ENCODE measurements at regions of chr1 and their contacts with region 1.

Region 1: GRCh38 chr1:177794376-177794991 is 175.4 kb downstream of the SEC16B start:
- DNase-seq: no peak
- ATAC-seq: no peak
- H3K4me3 ChIP-seq: no peak overlapping the region
- H3K27ac ChIP-seq: no peak overlapping the region
- H3K4me1 ChIP-seq: no peaks in the 10 kb centered on the region
- H3K27me3 ChIP-seq: no peaks in the 10 kb centered on the region
- CTCF ChIP-seq: no peak
- EP300 ChIP-seq: no peak
- POLR2A ChIP-seq: no peak
- RAD21 ChIP-seq: no peak

Region 2: GRCh38 chr1:177809819-177810218 is 15.3 kb after region 1 on chr1:
- CTCF ChIA-PET with region 1: interaction called, 13 read pairs
- POLR2A ChIA-PET with region 1: interaction called, 10 read pairs
- RAD21 ChIA-PET with region 1: interaction called, 25 read pairs
- SMC1A ChIA-PET with region 1: interaction called, 43 read pairs
- in situ Hi-C with region 1: no loop called
- intact Hi-C with region 1: no loop called
- DNase-seq: peak; percentile 38
- ATAC-seq: peak; percentile 94
- H3K4me3 ChIP-seq: no peak overlapping the region
- H3K27ac ChIP-seq: no peak overlapping the region
- H3K4me1 ChIP-seq: no peaks in the 10 kb centered on the region
- H3K27me3 ChIP-seq: no peaks in the 10 kb centered on the region
- CTCF ChIP-seq: no peak
- EP300 ChIP-seq: no peak
- POLR2A ChIP-seq: no peak
- RAD21 ChIP-seq: no peak

Region 3: DNA sequence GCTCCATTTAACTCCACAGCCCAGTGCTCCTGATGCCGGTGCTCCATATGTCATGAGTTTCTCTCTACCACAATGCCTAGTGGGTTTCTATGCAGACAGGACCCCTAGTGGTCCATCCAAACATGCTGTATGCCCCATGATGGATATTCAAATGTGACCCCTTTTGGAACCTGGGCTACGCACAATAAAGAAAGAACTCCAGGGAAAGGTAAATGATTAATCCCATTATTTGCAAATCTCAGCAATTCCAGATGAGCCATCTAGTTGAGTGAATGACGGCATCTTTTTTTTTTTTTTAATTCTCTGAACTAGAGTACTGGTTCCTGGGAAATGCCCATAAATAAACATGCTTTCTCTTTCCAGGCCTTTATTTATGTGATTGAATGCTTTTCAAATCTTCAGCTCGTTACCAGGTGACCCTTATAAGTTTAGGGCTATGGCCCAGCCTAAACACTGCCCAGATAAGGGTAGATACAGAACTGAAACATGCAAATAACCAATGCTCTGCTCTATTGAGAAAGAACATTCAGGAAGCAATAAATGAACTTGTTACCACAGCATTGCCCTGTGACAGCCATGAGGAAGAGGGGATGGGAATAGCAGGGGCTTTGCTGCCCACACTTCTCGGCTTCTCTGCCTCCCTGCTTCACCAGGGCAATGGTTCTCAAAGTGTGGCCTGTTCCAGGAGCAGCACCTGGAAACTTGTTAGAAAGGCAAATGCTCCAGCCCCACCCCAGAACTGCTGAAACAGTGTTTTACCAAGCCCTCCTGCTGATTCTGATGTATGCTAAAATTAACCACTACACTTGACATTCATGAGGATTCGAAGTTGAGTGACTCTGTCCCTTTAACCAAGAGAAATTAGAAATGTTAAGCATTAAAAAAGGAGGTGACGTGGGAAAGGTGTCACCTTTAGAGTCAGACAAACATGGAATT is 23.7 kb after region 1 on chr1:
- CTCF ChIA-PET with region 1: interaction called, 4 read pairs
- POLR2A ChIA-PET with region 1: interaction called, 5 read pairs
- RAD21 ChIA-PET with region 1: interaction called, 8 read pairs
- SMC1A ChIA-PET with region 1: interaction called, 16 read pairs
- in situ Hi-C with region 1: no loop called
- intact Hi-C with region 1: no loop called
- DNase-seq: peak; percentile 40
- ATAC-seq: peak; percentile 96
- H3K4me3 ChIP-seq: no peak overlapping the region
- H3K27ac ChIP-seq: no peak overlapping the region
- H3K4me1 ChIP-seq: peaks cover 5% of the 10 kb centered on the region; the same call in 1 of the 2 replicates
- H3K27me3 ChIP-seq: no peaks in the 10 kb centered on the region
- CTCF ChIP-seq: no peak
- EP300 ChIP-seq: peak in 1 of 2 experiments; percentile 25; a peak in 1 of 4 replicates
- POLR2A ChIP-seq: no peak
- RAD21 ChIP-seq: no peak

Region 4: DNA sequence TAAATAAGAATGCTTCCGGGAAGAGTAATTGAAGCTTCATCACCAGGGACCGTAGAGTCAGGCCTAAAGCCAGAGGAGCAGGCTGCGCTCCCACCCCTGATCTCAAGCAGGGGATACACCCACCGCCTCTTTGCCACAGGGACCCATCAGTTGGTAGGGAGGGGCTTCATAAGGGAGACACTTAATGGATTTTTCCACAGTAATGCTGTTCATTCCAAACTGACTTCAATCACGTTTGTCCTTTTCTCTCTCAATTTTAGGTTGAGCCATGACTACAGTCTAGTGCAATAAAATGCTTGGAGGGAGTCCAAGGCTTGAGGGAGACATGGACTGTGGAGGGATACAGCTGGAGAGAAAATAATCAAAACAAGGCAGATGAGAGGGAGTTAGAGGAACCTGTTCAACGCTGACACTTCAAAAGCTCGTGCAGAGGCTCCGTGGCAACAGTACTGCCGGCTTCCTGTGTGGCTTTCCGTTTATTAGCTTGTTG is 63.9 kb after region 1 on chr1:
- CTCF ChIA-PET with region 1: interaction called, 3 read pairs
- POLR2A ChIA-PET with region 1: interaction called, 5 read pairs
- RAD21 ChIA-PET with region 1: interaction called, 10 read pairs
- SMC1A ChIA-PET with region 1: interaction called, 12 read pairs
- in situ Hi-C with region 1: no loop called
- intact Hi-C with region 1: no loop called
- DNase-seq: no peak
- ATAC-seq: peak; percentile 55
- H3K4me3 ChIP-seq: no peak overlapping the region
- H3K27ac ChIP-seq: no peak overlapping the region
- H3K4me1 ChIP-seq: no peaks in the 10 kb centered on the region
- H3K27me3 ChIP-seq: no peaks in the 10 kb centered on the region
- CTCF ChIP-seq: no peak
- EP300 ChIP-seq: no peak
- POLR2A ChIP-seq: no peak
- RAD21 ChIP-seq: no peak

Region 5: DNA sequence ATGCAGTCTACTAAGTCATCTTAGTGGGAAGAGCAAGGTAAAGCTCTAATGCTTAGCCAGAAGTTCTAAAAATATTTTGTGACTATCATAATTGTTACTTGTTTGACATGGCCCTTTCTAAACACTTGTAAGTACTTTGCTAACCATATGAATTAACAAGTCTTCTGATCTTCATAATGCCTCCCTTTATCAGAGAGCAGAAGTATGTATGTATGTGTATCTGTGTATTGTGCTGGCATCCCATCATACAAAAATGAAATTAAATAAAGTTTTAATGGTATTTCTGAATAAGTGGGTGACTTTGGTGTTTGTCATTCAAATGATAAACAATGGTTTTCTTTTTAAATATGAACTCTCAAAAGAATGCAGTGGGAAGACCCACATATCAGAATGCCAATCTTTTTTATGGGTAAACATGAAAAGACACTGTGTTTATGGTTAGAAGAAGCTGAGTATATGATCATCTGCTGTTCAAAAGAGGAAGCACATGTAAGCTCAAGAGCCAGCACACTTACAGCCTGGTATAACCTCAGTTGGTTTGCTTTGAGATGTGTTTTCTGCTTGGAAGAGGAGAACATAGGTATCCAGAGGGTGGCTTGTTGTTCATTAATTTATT is 542.7 kb after region 1 on chr1:
- CTCF ChIA-PET with region 1: no interaction called
- POLR2A ChIA-PET with region 1: no interaction called
- RAD21 ChIA-PET with region 1: no interaction called
- SMC1A ChIA-PET with region 1: no interaction called
- in situ Hi-C with region 1: no loop called
- intact Hi-C with region 1: no loop called
- DNase-seq: no peak
- ATAC-seq: peak; percentile 45; the same call in 1 of the 3 replicates
- H3K4me3 ChIP-seq: no peak overlapping the region
- H3K27ac ChIP-seq: no peak overlapping the region
- H3K4me1 ChIP-seq: no peaks in the 10 kb centered on the region
- H3K27me3 ChIP-seq: no peaks in the 10 kb centered on the region
- CTCF ChIP-seq: no peak
- EP300 ChIP-seq: no peak
- POLR2A ChIP-seq: no peak
- RAD21 ChIP-seq: no peak